Activated T-helper 1 cell treated with anti-CD3 and anti-CD28 coated beads, Interleukin-12 subunit alpha, Interleukin-12 subunit beta, Interleukin-2, Interleukin-4 antibody, amounts not matched to agents 30 ng/mL and 10 ng/mL and 1 ng/mL, durations not matched to agents 14 hours and 24 hours and 36 hours (primary cell): ENCODE measurements at regions of chr15 and their contacts with region 1.

Region 1: GRCh38 chr15:85296615-85297402 is 83.6 kb upstream of the AKAP13 start:
- DNase-seq: peak; percentile 68
- H3K4me3 Mint-ChIP-seq: peak overlapping the region; percentile 34
- H3K27ac Mint-ChIP-seq: no peak overlapping the region
- H3K4me1 Mint-ChIP-seq: peaks cover 18% of the 10 kb centered on the region
- H3K27me3 Mint-ChIP-seq: peaks cover 5% of the 10 kb centered on the region

Region 2: DNA sequence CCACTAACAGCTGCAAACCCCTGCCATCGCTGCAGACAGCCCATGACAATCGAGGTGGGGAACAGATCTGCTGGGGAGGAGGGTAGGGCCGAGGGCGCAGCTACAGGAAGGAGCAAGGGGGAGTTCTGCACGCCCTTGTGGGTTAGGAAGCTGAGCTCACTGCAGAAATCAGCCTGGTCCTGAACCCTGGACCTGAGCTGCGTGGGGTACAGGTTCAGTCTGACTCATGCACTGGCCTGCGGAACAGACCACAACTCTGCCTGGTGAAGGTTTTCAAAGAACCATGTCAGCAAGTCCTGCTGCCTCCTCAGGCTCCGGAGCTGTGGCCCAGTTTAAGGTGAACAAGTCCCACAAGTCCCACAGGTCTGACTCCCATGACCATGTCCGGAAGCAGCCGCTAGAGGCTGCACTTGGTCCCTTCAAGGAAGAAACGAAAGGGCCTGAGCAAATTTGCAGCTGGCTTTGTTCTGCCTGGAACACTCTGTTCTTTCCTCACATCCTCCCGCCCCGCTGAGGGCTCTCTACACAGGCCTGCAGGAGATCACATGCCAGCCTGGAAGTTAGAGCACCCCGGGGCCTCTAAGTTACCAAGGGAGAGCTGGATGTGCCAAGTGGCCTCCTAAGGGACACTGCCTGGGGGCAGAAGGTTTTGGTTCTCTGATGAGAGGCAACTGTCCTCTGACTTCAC is 34.2 kb after region 1 on chr15:
- intact Hi-C with region 1: loop called (anchors 1 kb)
- DNase-seq: peak; percentile 72
- H3K4me3 Mint-ChIP-seq: peak overlapping the region; percentile 88
- H3K27ac Mint-ChIP-seq: peak overlapping the region; percentile 92
- H3K4me1 Mint-ChIP-seq: peaks cover 51% of the 10 kb centered on the region
- H3K27me3 Mint-ChIP-seq: no peaks in the 10 kb centered on the region

Region 3: DNA sequence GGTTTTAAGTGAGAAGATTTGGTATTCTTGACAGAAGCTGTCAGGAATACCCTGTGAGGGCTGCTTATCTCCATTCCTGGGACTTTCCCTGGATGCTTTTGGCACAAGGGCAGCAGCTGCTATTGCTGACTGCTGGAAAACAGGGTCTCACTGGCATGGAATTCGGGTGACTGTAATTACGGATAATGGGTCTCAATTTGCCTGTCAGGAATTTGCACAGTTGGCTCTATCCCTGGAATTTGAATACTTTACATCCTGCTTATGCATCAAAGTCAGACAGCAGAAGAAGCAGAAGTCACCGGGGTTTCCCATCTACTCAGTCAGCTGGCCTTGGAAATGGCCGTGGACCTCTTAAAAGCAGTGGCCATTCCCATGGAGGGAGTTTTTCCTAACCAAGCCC is 57.7 kb after region 1 on chr15:
- intact Hi-C with region 1: no loop called
- DNase-seq: no peak
- H3K4me3 Mint-ChIP-seq: no peak overlapping the region
- H3K27ac Mint-ChIP-seq: no peak overlapping the region
- H3K4me1 Mint-ChIP-seq: peaks cover 9% of the 10 kb centered on the region
- H3K27me3 Mint-ChIP-seq: no peaks in the 10 kb centered on the region

Region 4: GRCh38 chr15:85504749-85505676 is 208.2 kb after region 1 on chr15:
- intact Hi-C with region 1: loop called (anchors 1 kb)
- DNase-seq: peak; percentile 5
- H3K4me3 Mint-ChIP-seq: no peak overlapping the region
- H3K27ac Mint-ChIP-seq: no peak overlapping the region
- H3K4me1 Mint-ChIP-seq: peaks cover 20% of the 10 kb centered on the region
- H3K27me3 Mint-ChIP-seq: no peaks in the 10 kb centered on the region

Region 5: DNA sequence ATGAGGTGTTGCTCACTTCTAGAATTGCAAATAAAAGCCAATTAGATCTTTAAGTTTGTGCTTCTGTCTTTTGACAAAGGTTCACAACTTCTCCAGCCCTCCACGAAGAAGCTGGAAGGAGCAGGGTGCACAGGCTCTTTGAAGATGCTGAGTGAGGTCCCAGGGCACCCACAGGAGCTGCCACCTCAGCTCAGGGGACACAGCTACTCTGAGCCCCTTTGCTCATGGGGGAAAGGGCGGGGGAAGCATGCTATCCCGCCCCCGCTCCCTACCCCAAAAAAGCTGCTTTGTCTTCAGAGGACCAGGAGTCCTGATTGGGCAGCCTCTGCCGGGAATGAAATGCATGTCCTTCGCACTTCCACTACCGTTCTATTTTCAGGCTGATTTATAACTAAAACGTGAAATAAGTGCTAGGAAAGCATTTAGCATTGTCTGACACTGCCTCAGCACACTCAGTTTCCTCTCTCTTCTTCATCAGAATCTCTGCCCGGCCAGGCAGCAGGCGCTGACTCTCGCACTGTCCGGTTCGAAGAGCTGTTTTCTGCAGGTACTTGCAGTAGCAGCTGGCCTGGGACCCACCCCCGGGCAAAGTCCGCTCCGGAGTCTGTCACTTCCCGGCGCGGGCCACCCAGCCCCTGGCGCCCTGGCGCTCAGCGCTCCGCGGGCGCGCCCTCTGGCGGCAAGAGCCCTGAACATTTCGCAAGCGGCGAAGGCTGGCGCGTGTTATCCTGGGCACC is 543.4 kb after region 1 on chr15:
- intact Hi-C with region 1: loop called (anchors 10 kb)
- DNase-seq: peak; percentile 76
- H3K4me3 Mint-ChIP-seq: peak overlapping the region; percentile 29
- H3K27ac Mint-ChIP-seq: no peak overlapping the region
- H3K4me1 Mint-ChIP-seq: no peaks in the 10 kb centered on the region
- H3K27me3 Mint-ChIP-seq: peaks cover 7% of the 10 kb centered on the region